ENCODE measurements at regions of chr11 and their contacts with region 1.

Region 1: GRCh38 chr11:35391922-35392813 is 27.2 kb downstream of the SLC1A2 start:
- DNase-seq: peak; percentile 75 to 94 (median 82)
- ATAC-seq: peak; percentile 75
- H3K4me3 ChIP-seq: no peak overlapping the region
- H3K4me3 Mint-ChIP-seq: peak overlapping the region; percentile 35
- H3K27ac ChIP-seq: no peak overlapping the region
- H3K27ac Mint-ChIP-seq: no peak overlapping the region
- H3K4me1 ChIP-seq: peaks cover 5% of the 10 kb centered on the region
- H3K4me1 Mint-ChIP-seq: peaks cover 17% of the 10 kb centered on the region
- H3K27me3 ChIP-seq: peaks cover 0 to 3% of the 10 kb centered on the region in 2 experiments
- H3K27me3 Mint-ChIP-seq: no peaks in the 10 kb centered on the region
- CTCF ChIP-seq: peak; percentile 94

Region 2: GRCh38 chr11:34997952-34998528 is 394.1 kb before region 1 on chr11:
- CTCF ChIA-PET with region 1: interaction called, 14 read pairs
- POLR2A ChIA-PET with region 1: no interaction called
- intact Hi-C with region 1: loop called (anchors 1 kb)
- DNase-seq: peak in 2 of 9 experiments; percentile 38 to 54
- ATAC-seq: peak; percentile 58
- H3K4me3 ChIP-seq: no peak overlapping the region
- H3K4me3 Mint-ChIP-seq: no peak overlapping the region
- H3K27ac ChIP-seq: no peak overlapping the region
- H3K27ac Mint-ChIP-seq: peak overlapping the region; percentile 49
- H3K4me1 ChIP-seq: peaks cover 6% of the 10 kb centered on the region
- H3K4me1 Mint-ChIP-seq: peaks cover 14% of the 10 kb centered on the region
- H3K27me3 ChIP-seq: no peaks in the 10 kb centered on the region
- H3K27me3 Mint-ChIP-seq: no peaks in the 10 kb centered on the region
- CTCF ChIP-seq: peak; percentile 95

Region 3: DNA sequence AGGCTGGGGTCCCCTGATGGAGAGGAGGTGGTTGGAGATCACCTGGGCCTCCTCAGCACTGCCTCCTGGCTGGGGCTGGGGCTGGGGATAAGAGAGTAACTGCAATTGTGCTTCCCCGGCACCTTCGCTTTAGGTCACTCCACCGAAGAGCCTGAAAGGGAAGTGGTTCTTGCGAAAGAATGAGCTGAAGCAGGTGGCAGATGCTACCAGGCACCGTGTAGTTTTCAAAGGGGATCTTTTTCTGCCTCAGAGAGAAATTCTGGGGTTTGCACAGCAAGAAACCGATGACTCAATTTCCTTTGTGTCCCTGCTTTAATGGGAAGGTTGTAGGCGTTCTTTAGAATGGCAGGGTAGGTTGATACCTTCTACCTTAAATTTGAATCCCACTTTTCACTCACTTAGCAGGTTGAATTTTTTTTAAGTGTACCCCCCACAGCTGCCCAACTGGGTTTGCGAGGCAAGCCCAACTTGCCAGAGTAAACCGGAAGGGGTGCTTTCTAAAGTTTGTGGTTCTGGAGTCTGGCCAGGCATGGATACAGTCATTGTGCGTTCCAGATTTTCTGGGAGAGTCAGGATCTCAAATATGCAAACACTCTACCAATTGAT is 247.9 kb before region 1 on chr11:
- CTCF ChIA-PET with region 1: interaction called, 11 read pairs
- POLR2A ChIA-PET with region 1: no interaction called
- intact Hi-C with region 1: loop called in 1 of 2 experiments (anchors 5 kb)
- DNase-seq: peak in 8 of 9 experiments; percentile 35 to 89 (median 70)
- ATAC-seq: peak; percentile 51
- H3K4me3 ChIP-seq: peak overlapping the region; percentile 37 to 46
- H3K4me3 Mint-ChIP-seq: peak overlapping the region; percentile 79
- H3K27ac ChIP-seq: peak overlapping the region; percentile 54 to 77
- H3K27ac Mint-ChIP-seq: peak overlapping the region; percentile 98
- H3K4me1 ChIP-seq: peaks cover 70% of the 10 kb centered on the region
- H3K4me1 Mint-ChIP-seq: peaks cover 80% of the 10 kb centered on the region
- H3K27me3 ChIP-seq: no peaks in the 10 kb centered on the region
- H3K27me3 Mint-ChIP-seq: no peaks in the 10 kb centered on the region
- CTCF ChIP-seq: no peak

Region 4: DNA sequence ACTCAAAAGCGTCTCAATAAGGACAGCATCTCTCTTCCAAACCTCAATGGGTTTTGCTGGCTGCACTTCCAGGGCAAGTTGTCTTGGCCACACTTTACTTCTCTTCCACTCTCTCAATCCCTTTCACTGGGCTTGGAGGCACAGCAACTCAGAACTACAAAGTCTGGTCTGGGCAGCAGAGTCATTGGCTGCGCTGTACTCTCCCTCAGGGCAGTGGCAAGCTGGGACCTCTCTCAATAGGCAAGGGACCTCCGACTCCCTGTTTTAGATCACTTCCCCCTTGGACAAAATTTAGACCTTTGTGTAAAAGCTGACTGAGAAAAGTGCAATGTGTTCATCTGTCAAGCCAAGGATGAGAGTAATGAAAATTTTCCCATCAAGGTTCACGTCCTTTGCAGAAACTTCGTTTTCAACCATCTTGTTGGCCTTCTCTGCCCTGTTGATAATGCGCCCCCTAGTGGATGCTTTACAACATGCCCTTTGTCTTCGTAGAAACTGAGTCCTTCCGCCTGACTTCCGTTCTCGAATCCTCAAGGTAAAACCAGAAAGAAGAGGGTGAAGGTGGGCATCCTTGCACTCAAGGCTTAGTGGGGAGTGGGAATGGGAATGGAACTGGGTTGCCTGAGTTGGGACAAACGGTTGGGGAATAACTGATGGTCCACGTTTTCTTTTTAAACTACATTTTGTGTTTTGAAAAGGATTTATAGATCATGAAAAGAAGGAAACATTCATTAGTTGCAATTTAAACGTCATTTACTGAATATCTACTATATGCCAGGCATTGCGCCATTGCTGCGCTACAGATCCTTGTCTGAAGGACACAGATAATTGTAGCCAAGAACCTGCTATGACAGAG is 154.1 kb before region 1 on chr11:
- CTCF ChIA-PET with region 1: interaction called, 5 read pairs
- POLR2A ChIA-PET with region 1: no interaction called
- intact Hi-C with region 1: loop called in 1 of 2 experiments (anchors 5 kb)
- DNase-seq: peak in 7 of 9 experiments; percentile 29 to 84 (median 62)
- ATAC-seq: no peak
- H3K4me3 ChIP-seq: no peak overlapping the region
- H3K4me3 Mint-ChIP-seq: no peak overlapping the region
- H3K27ac ChIP-seq: no peak overlapping the region
- H3K27ac Mint-ChIP-seq: no peak overlapping the region
- H3K4me1 ChIP-seq: peaks cover 46% of the 10 kb centered on the region
- H3K4me1 Mint-ChIP-seq: peaks cover 87% of the 10 kb centered on the region
- H3K27me3 ChIP-seq: no peaks in the 10 kb centered on the region
- H3K27me3 Mint-ChIP-seq: no peaks in the 10 kb centered on the region
- CTCF ChIP-seq: peak; percentile 65

Region 5: DNA sequence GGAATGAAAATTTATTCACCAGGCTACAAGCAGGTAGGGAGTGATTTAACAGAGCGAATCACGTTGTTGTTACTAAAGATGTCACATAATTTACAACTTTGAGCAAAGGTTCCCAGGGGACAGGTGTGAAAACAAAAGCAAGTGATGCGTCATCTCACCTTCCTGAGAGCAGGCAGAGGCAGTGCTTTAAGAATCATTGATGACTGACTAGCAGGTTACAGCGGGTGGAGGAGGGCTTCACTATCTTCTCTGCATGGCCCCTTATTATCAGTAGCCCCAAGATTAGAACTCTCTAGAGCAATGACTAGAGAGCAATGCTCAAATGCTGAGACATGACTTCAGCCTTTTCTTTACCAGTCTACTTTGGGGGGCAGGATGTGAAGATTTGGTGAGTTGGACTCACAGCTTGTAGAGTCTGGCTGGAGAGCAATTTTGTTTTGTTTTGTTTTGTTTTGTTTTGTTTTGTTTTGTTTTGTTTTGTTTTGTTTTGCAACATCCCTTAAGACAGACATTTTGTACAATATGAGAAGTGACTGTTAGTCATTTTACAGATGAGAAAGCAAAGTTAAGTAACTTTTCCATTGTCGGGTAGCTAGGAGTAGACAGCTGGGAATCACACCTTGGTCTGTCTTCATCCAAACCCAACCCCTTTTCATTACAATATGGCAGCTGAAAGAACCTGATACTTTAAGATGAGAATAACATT is 57.6 kb before region 1 on chr11:
- CTCF ChIA-PET with region 1: interaction called, 10 read pairs
- POLR2A ChIA-PET with region 1: interaction called, 3 read pairs
- intact Hi-C with region 1: no loop called
- DNase-seq: peak in 4 of 9 experiments; percentile 25 to 76 (median 63)
- ATAC-seq: peak; percentile 45
- H3K4me3 ChIP-seq: no peak overlapping the region
- H3K4me3 Mint-ChIP-seq: no peak overlapping the region
- H3K27ac ChIP-seq: no peak overlapping the region
- H3K27ac Mint-ChIP-seq: peak overlapping the region; percentile 89
- H3K4me1 ChIP-seq: peaks cover 28% of the 10 kb centered on the region
- H3K4me1 Mint-ChIP-seq: peaks cover 47% of the 10 kb centered on the region
- H3K27me3 ChIP-seq: no peaks in the 10 kb centered on the region
- H3K27me3 Mint-ChIP-seq: no peaks in the 10 kb centered on the region
- CTCF ChIP-seq: no peak

Region 6: DNA sequence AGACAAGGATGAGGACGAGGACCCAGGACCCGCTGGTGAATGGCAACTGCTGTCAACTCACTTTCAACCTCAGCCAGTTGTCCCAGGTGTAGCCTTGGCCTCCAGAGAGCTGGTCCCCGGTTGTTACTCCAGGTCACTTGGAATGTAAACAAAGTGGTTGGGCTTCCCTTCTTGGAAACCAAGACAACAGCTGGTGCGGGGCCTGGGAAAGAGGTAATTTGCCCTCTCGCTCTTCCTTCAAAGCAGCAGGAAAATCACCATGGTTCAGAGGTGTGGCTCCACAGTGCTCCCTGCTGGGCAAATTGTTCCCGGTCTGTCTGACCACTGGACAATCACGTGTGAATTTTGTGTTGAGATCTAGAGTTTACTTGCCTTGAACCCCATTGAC is 12.2 kb after region 1 on chr11:
- CTCF ChIA-PET with region 1: interaction called, 10 read pairs
- POLR2A ChIA-PET with region 1: no interaction called
- intact Hi-C with region 1: no loop called
- DNase-seq: peak in 2 of 9 experiments; percentile 12 to 19
- ATAC-seq: no peak
- H3K4me3 ChIP-seq: no peak overlapping the region
- H3K4me3 Mint-ChIP-seq: no peak overlapping the region
- H3K27ac ChIP-seq: no peak overlapping the region
- H3K27ac Mint-ChIP-seq: no peak overlapping the region
- H3K4me1 ChIP-seq: no peaks in the 10 kb centered on the region
- H3K4me1 Mint-ChIP-seq: no peaks in the 10 kb centered on the region
- H3K27me3 ChIP-seq: no peaks in the 10 kb centered on the region
- H3K27me3 Mint-ChIP-seq: peaks cover 8% of the 10 kb centered on the region
- CTCF ChIP-seq: no peak